ENCODE measurements at regions of chr5 and their contacts with region 1.

Region 1: DNA sequence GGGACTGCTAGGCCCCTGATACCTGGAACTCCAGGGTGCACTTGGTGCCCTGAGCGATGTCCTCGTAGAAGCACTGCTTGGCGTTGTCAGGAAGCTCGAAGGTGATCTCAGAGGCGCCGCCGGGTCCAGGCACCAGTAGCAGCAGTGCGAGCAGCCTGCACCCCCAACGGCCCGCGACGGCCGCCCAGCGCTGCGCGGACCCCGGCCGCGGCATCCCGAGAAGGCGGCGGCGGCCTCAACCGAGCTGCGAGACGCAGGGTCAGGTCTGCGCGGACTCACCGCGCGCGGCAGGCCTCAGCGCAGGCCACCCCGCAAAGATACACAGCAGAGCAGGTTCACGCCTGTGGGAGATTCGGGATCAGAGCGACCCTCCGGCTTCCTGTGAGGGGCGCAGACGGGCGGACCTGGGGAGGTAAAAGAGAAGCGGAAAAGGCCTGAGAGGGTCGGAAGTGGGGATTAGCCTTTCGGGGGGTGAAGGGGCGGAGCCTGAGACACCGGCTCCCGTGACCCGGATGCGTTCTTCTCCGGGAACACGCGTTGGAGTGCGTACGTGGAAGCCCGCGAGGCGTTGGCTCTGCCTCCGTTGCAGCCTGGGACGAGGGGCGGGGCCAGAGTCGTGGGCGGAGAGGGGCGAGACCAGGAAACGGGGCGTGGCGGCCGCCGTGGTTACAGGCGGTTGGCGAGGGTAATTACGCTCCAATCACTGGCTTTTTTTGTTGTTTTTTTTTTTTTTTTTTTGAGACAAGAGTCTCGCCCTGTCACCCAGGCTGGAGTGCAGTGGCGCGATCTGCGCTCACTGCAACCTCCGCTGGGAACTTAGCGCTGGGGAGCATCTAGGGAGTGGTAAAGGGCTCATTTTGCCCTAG is at the start of gene TMED7:
- DNase-seq: peak; percentile 96
- CTCF ChIP-seq: no peak

Region 2: DNA sequence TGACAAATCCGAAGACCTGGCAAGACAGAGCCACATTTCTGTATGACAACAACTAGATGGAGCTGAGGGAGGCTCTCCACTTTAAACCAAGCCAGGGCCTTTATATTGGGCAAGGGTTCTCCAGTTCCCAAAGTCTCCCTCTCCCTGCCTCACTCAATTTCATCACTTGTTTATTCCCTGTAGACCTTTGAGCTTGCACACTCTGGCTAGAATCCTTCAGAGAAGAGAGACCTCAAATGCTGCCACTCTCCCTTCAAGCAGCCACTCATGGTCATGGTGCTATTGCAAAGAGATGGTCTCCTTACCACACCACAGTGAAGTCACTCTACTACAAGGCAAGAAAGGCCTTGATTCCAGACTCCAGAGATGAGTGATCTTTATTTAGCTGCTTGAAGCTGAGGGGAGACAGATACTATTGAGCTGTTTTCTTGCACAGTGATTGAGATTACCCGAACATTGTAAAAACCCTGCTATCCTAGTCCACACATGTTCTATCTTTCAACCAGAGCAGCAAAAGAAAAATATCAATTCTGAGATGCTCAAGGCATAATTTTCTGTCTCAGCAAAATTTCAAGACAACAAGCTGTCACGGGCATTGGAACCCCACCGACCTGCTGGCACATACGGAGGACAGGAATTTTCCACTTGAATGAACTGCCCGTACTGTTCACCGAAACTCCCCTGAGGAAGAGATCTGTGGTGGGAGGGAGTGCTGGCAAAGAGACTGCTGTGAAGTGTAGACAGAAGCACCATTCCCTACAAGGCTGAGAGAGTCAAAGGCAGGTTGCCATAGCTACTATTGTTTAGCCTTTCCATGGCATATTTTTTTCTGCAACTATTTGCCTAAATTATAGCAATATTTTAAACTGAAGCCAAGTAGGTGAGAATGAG is 109.5 kb after region 1 on chr5:
- in situ Hi-C with region 1: no loop called
- DNase-seq: no peak
- CTCF ChIP-seq: no peak

Region 3: GRCh38 chr5:115841382-115842088 is 215.7 kb after region 1 on chr5 and contains the starts of genes AP3S1 and ATG12:
- in situ Hi-C with region 1: loop called (anchors 10 kb)
- DNase-seq: peak; percentile 88
- CTCF ChIP-seq: no peak

Region 4: DNA sequence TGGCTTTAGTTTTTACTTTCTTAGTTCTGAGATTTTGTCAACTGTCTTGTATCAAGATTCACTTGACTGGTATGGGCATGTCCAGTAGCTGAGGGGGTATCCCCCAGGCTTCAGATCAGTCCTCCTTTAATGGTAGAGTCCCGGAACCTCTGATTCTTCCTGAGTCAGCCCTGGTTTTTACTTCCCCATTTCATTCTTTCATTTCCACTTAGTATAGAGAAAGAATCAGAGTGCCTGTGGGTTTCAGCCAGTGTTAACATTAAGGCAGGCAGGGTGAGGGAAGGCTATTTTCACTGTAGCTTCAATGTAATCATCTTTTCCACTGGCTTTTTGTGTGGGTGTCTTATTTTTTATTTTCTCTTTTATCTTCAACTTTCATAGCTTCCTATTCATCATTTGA is 450.7 kb after region 1 on chr5:
- in situ Hi-C with region 1: loop called (anchors 10 kb)
- DNase-seq: peak; percentile 71
- CTCF ChIP-seq: no peak

Measured in GM13977 (cell line).